Ascending aorta (tissue), 2 donors: ENCODE measurements at regions of chr6 and their contacts with region 1.

Region 1: GRCh38 chr6:132190097-132190814 is 211.0 kb downstream of the MOXD1 start:
- DNase-seq: no peak
- H3K4me3 ChIP-seq: no peak overlapping the region
- H3K27ac ChIP-seq: peak overlapping the region; percentile 64 to 79
- H3K4me1 ChIP-seq: peaks cover 0 to 24% of the 10 kb centered on the region in 2 donors
- H3K27me3 ChIP-seq: no peaks in the 10 kb centered on the region
- CTCF ChIP-seq: no peak

Region 2: GRCh38 chr6:131773284-131773950 is 416.8 kb before region 1 on chr6:
- intact Hi-C with region 1: loop called (anchors 10 kb)
- DNase-seq: no peak
- H3K4me3 ChIP-seq: no peak overlapping the region
- H3K27ac ChIP-seq: peak overlapping the region; percentile 45 to 70
- H3K4me1 ChIP-seq: peaks cover 13 to 18% of the 10 kb centered on the region in 2 donors
- H3K27me3 ChIP-seq: no peaks in the 10 kb centered on the region
- CTCF ChIP-seq: no peak

Region 3: GRCh38 chr6:132084833-132085509 is 105.3 kb before region 1 on chr6:
- intact Hi-C with region 1: loop called (anchors 5 kb)
- DNase-seq: no peak
- H3K4me3 ChIP-seq: peak overlapping the region in 1 of 2 donors; percentile 29
- H3K27ac ChIP-seq: peak overlapping the region; percentile 93 to 95
- H3K4me1 ChIP-seq: peaks cover 6 to 23% of the 10 kb centered on the region in 2 donors
- H3K27me3 ChIP-seq: no peaks in the 10 kb centered on the region
- CTCF ChIP-seq: no peak

Region 4: GRCh38 chr6:132115714-132116366 is 74.4 kb before region 1 on chr6:
- intact Hi-C with region 1: no loop called
- DNase-seq: no peak
- H3K4me3 ChIP-seq: peak overlapping the region; percentile 20 to 57
- H3K27ac ChIP-seq: peak overlapping the region; percentile 64 to 74
- H3K4me1 ChIP-seq: peaks cover 0 to 18% of the 10 kb centered on the region in 2 donors
- H3K27me3 ChIP-seq: no peaks in the 10 kb centered on the region
- CTCF ChIP-seq: no peak